ENCODE measurements at regions of chr11 and their contacts with region 1.

Region 1: DNA sequence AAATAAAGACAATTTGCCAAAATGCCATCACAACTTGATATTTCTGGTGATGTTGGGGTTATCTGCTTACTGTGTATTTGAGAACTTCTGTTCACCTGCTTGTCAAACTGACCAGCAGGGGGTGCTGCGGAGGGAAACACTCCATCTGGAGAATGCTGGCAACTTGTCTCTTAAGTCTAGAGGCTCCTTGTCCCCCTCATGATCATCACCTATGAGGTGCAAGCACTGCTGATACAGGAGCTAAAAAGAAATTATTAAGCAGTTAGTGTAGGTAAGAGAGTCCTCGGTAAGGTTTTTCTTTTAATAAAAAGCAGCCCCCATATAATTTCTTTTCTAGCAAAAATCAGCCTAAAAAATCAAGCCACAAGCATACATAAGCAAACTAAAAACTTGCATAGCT is 32.7 kb upstream of the GLYATL1B start:
- DNase-seq: peak in 1 of 2 experiments; percentile 71
- H3K4me3 ChIP-seq: no peak overlapping the region
- H3K4me3 Mint-ChIP-seq: no peak overlapping the region
- H3K27ac Mint-ChIP-seq: no peak overlapping the region
- H3K4me1 ChIP-seq: no peaks in the 10 kb centered on the region
- H3K4me1 Mint-ChIP-seq: peaks cover 12% of the 10 kb centered on the region
- H3K27me3 ChIP-seq: no peaks in the 10 kb centered on the region
- H3K27me3 Mint-ChIP-seq: no peaks in the 10 kb centered on the region
- CTCF ChIP-seq: peak; percentile 53 to 57

Region 2: DNA sequence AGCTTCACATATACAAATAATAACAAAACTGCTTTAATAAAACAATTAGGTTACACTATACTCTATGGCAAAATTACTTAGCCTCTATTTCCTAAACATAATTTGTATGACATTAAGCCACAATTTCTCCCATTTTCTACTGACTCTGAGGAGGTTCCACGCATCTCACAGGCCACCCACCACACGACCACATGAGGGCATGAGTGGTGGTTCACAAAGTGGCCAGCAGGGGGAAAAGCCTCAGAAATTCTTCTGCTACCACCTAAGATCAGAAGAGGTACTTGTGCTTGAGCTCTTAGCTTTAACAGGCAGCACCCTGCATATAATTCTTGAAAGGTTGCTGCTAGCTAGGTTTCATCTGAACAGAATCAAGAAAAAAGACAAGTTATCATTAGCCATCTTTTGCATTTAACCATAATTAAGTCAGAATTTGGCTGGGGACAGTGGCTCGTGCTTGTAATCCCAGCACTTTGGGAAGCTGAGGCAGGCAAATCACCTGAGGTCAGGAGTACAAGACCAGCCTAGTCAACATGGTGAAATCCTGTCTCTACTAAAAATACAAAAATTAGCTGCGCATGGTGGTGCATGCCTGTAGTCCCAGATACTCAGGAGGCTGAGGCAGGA is 485.4 kb before region 1 on chr11:
- CTCF ChIA-PET with region 1: interaction called, 3 read pairs
- POLR2A ChIA-PET with region 1: no interaction called
- intact Hi-C with region 1: loop called (anchors 1 kb)
- DNase-seq: peak; percentile 68 to 73
- H3K4me3 ChIP-seq: no peak overlapping the region
- H3K4me3 Mint-ChIP-seq: no peak overlapping the region
- H3K27ac Mint-ChIP-seq: no peak overlapping the region
- H3K4me1 ChIP-seq: no peaks in the 10 kb centered on the region
- H3K4me1 Mint-ChIP-seq: no peaks in the 10 kb centered on the region
- H3K27me3 ChIP-seq: no peaks in the 10 kb centered on the region
- H3K27me3 Mint-ChIP-seq: no peaks in the 10 kb centered on the region
- CTCF ChIP-seq: peak; percentile 86 to 95

Region 3: GRCh38 chr11:58675334-58676155 is 377.8 kb before region 1 on chr11:
- CTCF ChIA-PET with region 1: no interaction called
- POLR2A ChIA-PET with region 1: no interaction called
- intact Hi-C with region 1: loop called (anchors 1 kb)
- DNase-seq: peak; percentile 78 to 85
- H3K4me3 ChIP-seq: no peak overlapping the region
- H3K4me3 Mint-ChIP-seq: no peak overlapping the region
- H3K27ac Mint-ChIP-seq: no peak overlapping the region
- H3K4me1 ChIP-seq: no peaks in the 10 kb centered on the region
- H3K4me1 Mint-ChIP-seq: no peaks in the 10 kb centered on the region
- H3K27me3 ChIP-seq: no peaks in the 10 kb centered on the region
- H3K27me3 Mint-ChIP-seq: no peaks in the 10 kb centered on the region
- CTCF ChIP-seq: peak; percentile 92 to 98

Region 4: DNA sequence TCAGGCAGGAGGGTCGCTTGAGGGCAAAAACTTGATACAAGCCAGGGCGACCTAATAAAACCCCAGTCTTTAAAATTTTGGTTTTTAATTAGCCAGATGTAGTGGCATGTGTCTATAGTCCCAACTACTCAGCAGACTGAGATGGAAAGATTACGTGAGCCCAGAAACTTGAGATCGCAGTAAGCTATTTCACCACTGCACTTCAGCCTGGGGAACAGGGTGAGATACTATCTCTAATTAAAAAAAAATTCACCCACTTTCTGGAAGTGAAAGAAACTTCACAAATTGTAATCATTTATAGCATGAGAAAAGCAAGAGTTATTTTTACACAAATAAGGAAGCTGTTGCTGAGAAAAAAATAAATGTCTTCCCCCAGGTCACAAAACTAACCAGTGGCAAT is 208.0 kb before region 1 on chr11:
- CTCF ChIA-PET with region 1: no interaction called
- POLR2A ChIA-PET with region 1: no interaction called
- intact Hi-C with region 1: loop called (anchors 1 kb)
- DNase-seq: no peak
- H3K4me3 ChIP-seq: no peak overlapping the region
- H3K4me3 Mint-ChIP-seq: no peak overlapping the region
- H3K27ac Mint-ChIP-seq: no peak overlapping the region
- H3K4me1 ChIP-seq: no peaks in the 10 kb centered on the region
- H3K4me1 Mint-ChIP-seq: no peaks in the 10 kb centered on the region
- H3K27me3 ChIP-seq: no peaks in the 10 kb centered on the region
- H3K27me3 Mint-ChIP-seq: peaks cover 11% of the 10 kb centered on the region
- CTCF ChIP-seq: no peak

Region 5: GRCh38 chr11:58923300-58923788 is 130.0 kb before region 1 on chr11:
- CTCF ChIA-PET with region 1: interaction called, 26 read pairs
- POLR2A ChIA-PET with region 1: no interaction called
- intact Hi-C with region 1: loop called (anchors 1 kb)
- DNase-seq: no peak
- H3K4me3 ChIP-seq: no peak overlapping the region
- H3K4me3 Mint-ChIP-seq: no peak overlapping the region
- H3K27ac Mint-ChIP-seq: peak overlapping the region; percentile 25
- H3K4me1 ChIP-seq: peaks cover 69% of the 10 kb centered on the region
- H3K4me1 Mint-ChIP-seq: peaks cover 48% of the 10 kb centered on the region
- H3K27me3 ChIP-seq: no peaks in the 10 kb centered on the region
- H3K27me3 Mint-ChIP-seq: no peaks in the 10 kb centered on the region
- CTCF ChIP-seq: peak in 1 of 2 experiments; percentile 23

Region 6: DNA sequence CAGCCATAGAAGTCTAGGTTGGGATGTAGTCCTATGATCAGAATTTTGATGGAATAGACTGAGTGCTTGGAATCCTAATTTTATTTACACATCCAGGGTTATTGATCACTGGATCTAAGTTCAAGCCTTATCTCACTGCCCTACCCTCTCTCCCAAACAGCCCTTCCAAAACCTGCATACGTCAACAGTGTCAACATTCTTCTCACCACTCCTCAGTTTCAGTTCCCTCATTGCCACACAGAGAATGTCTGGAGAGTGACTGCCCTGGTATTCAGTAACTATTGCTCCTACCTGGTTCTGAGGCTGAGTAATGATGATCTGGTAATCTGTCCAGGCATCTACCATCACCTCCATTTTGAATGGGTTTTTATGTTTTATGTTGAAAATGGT is 54.1 kb before region 1 on chr11:
- CTCF ChIA-PET with region 1: interaction called, 9 read pairs
- POLR2A ChIA-PET with region 1: no interaction called
- intact Hi-C with region 1: loop called (anchors 1 kb)
- DNase-seq: peak; percentile 70 to 72
- H3K4me3 ChIP-seq: no peak overlapping the region
- H3K4me3 Mint-ChIP-seq: peak overlapping the region; percentile 53
- H3K27ac Mint-ChIP-seq: peak overlapping the region; percentile 92
- H3K4me1 ChIP-seq: peaks cover 25% of the 10 kb centered on the region
- H3K4me1 Mint-ChIP-seq: peaks cover 18% of the 10 kb centered on the region
- H3K27me3 ChIP-seq: no peaks in the 10 kb centered on the region
- H3K27me3 Mint-ChIP-seq: no peaks in the 10 kb centered on the region
- CTCF ChIP-seq: no peak

Region 7: DNA sequence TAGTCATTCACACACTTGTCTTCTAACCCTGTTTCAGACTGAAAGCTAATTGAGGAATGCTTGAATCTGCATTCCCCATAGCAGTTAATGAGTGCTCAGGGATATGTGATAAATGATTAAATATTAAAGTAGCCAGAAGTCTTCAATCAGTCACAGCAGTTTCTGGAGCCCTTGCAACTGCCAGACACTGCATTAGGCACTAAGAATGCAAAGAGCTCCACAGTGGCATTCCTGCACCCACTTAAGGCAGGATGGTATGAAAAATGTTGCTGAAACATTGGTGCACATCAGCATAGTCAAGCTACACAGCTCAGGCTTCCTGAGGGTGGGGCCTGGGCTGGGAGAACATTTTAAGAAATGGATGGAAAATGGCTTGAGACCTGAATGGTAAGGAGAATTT is 125.0 kb after region 1 on chr11:
- CTCF ChIA-PET with region 1: no interaction called
- POLR2A ChIA-PET with region 1: no interaction called
- intact Hi-C with region 1: no loop called
- DNase-seq: no peak
- H3K4me3 ChIP-seq: no peak overlapping the region
- H3K4me3 Mint-ChIP-seq: no peak overlapping the region
- H3K27ac Mint-ChIP-seq: no peak overlapping the region
- H3K4me1 ChIP-seq: peaks cover 34% of the 10 kb centered on the region
- H3K4me1 Mint-ChIP-seq: peaks cover 28% of the 10 kb centered on the region
- H3K27me3 ChIP-seq: no peaks in the 10 kb centered on the region
- H3K27me3 Mint-ChIP-seq: no peaks in the 10 kb centered on the region
- CTCF ChIP-seq: no peak

Measured in Caco-2 (cell line).